ENCODE measurements at regions of chr20 and their contacts with region 1.

Region 1: DNA sequence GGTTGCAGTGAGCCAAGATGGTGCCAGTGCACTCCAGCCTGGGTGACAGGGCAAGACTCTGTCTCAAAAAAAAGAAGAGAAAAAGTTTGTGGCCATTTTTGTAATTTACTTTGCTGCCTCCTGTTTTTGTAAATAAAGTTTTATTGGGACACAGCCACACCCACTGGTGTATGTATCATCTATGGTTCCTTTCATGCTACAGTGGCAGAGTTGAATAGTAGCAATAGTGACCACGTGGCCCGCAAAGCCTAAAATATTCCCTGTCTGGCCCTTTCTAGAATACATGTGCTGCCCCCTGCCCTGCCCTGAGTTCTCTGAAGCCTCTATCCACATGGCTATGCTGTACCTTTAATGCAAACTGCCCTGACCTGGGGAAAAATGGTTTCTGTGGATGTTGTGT is 75.3 kb upstream of the ZNF133 start:
- DNase-seq: no peak
- H3K4me3 ChIP-seq: no peak overlapping the region
- H3K27ac ChIP-seq: no peak overlapping the region
- H3K4me1 ChIP-seq: no peaks in the 10 kb centered on the region
- H3K27me3 ChIP-seq: no peaks in the 10 kb centered on the region
- CTCF ChIP-seq: no peak

Region 2: GRCh38 chr20:17169585-17170136 is 1043.3 kb before region 1 on chr20:
- CTCF ChIA-PET with region 1: no interaction called
- POLR2A ChIA-PET with region 1: no interaction called
- intact Hi-C with region 1: no loop called
- DNase-seq: no peak
- H3K4me3 ChIP-seq: no peak overlapping the region
- H3K27ac ChIP-seq: no peak overlapping the region
- H3K4me1 ChIP-seq: no peaks in the 10 kb centered on the region
- H3K27me3 ChIP-seq: peaks cover 34% of the 10 kb centered on the region
- CTCF ChIP-seq: no peak

Region 3: GRCh38 chr20:19767061-19767460 is 1554.1 kb after region 1 on chr20:
- CTCF ChIA-PET with region 1: interaction called, 10 read pairs
- POLR2A ChIA-PET with region 1: no interaction called
- intact Hi-C with region 1: no loop called
- DNase-seq: peak; percentile 77 to 97
- H3K4me3 ChIP-seq: peak overlapping the region; percentile 20; the same call in 1 of the 2 replicates
- H3K27ac ChIP-seq: peak overlapping the region; percentile 97
- H3K4me1 ChIP-seq: peaks cover 56% of the 10 kb centered on the region
- H3K27me3 ChIP-seq: no peaks in the 10 kb centered on the region
- CTCF ChIP-seq: no peak